ENCODE measurements at regions of chr3 and their contacts with region 1.

Region 1: GRCh38 chr3:138915503-138916498 is 31.1 kb downstream of the FOXL2 start:
- DNase-seq: peak; percentile 58
- ATAC-seq: peak; percentile 94
- H3K4me3 ChIP-seq: peak overlapping the region; percentile 69 to 80
- H3K27ac ChIP-seq: peak overlapping the region; percentile 89
- H3K4me1 ChIP-seq: peaks cover 25% of the 10 kb centered on the region
- H3K27me3 ChIP-seq: no peaks in the 10 kb centered on the region
- CTCF ChIP-seq: peak; percentile 99

Region 2: GRCh38 chr3:138578141-138578540 is 337.7 kb before region 1 on chr3:
- CTCF ChIA-PET with region 1: interaction called, 12 read pairs
- POLR2A ChIA-PET with region 1: no interaction called
- in situ Hi-C with region 1: no loop called
- intact Hi-C with region 1: no loop called
- DNase-seq: no peak
- ATAC-seq: no peak
- H3K4me3 ChIP-seq: no peak overlapping the region
- H3K27ac ChIP-seq: peak overlapping the region; percentile 59
- H3K4me1 ChIP-seq: peaks cover 12% of the 10 kb centered on the region
- H3K27me3 ChIP-seq: no peaks in the 10 kb centered on the region
- CTCF ChIP-seq: no peak

Region 3: DNA sequence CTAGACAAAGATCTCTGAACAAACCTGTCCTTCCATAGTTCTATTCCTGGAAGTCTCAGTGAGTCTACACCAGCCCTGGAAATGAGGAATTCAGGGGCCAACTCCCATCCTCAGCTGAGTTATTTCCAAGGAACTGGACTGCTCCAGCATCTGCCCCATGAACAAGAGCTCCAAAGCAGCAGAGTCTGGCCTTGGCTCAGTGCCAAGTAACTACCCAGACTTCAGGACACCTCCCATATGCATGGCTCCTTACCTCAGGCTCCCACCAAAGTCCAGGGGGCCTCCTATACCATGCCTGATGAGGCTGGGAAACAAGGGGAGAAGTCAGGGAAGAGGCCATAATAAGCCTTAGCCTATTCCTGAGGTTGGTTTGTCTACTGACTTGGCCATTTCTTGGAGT is 262.2 kb before region 1 on chr3:
- CTCF ChIA-PET with region 1: no interaction called
- POLR2A ChIA-PET with region 1: no interaction called
- in situ Hi-C with region 1: no loop called
- intact Hi-C with region 1: no loop called
- DNase-seq: no peak
- ATAC-seq: no peak
- H3K4me3 ChIP-seq: no peak overlapping the region
- H3K27ac ChIP-seq: no peak overlapping the region
- H3K4me1 ChIP-seq: no peaks in the 10 kb centered on the region
- H3K27me3 ChIP-seq: no peaks in the 10 kb centered on the region
- CTCF ChIP-seq: no peak

Region 4: DNA sequence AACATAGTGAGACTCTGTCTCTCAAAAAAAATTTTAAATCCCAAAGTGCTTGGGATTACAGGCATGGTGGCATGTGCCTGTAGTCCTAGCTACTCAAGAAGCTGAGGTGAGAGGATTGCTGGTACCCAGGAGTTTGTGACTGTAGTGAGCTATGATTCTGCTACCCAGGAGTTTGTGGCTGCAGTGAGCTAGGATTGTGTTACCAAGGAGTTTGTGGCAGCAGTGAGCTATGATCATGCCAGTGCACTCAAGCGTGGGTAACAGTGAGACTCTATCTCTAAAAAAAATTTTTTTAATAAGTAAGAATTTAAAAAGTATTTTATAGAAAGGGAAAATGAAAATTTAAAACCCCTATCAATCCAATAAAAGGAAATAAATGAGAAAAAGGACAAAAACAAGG is 237.7 kb before region 1 on chr3:
- CTCF ChIA-PET with region 1: interaction called, 10 read pairs
- POLR2A ChIA-PET with region 1: interaction called, 5 read pairs
- in situ Hi-C with region 1: no loop called
- intact Hi-C with region 1: no loop called
- DNase-seq: no peak
- ATAC-seq: no peak
- H3K4me3 ChIP-seq: no peak overlapping the region
- H3K27ac ChIP-seq: peak overlapping the region; percentile 48
- H3K4me1 ChIP-seq: peaks cover 24% of the 10 kb centered on the region; the same call in 1 of the 2 replicates
- H3K27me3 ChIP-seq: no peaks in the 10 kb centered on the region
- CTCF ChIP-seq: no peak

Region 5: GRCh38 chr3:138740072-138740471 is 175.7 kb before region 1 on chr3:
- CTCF ChIA-PET with region 1: interaction called, 12 read pairs
- POLR2A ChIA-PET with region 1: no interaction called
- in situ Hi-C with region 1: no loop called
- intact Hi-C with region 1: no loop called
- DNase-seq: no peak
- ATAC-seq: no peak
- H3K4me3 ChIP-seq: no peak overlapping the region
- H3K27ac ChIP-seq: no peak overlapping the region
- H3K4me1 ChIP-seq: no peaks in the 10 kb centered on the region
- H3K27me3 ChIP-seq: no peaks in the 10 kb centered on the region
- CTCF ChIP-seq: no peak

Region 6: GRCh38 chr3:138834359-138835212 is 81.2 kb before region 1 on chr3 and contains the start of gene PIK3CB:
- CTCF ChIA-PET with region 1: interaction called, 9 read pairs
- POLR2A ChIA-PET with region 1: no interaction called
- in situ Hi-C with region 1: no loop called
- intact Hi-C with region 1: loop called (anchors 2 kb)
- DNase-seq: peak; percentile 38
- ATAC-seq: peak; percentile 99
- H3K4me3 ChIP-seq: peak within 1 kb of the TSS; percentile 85
- H3K27ac ChIP-seq: peak within 1 kb of the TSS; percentile 100
- H3K4me1 ChIP-seq: peaks cover 24% of the 10 kb centered on the region
- H3K27me3 ChIP-seq: no peaks in the 10 kb centered on the region
- CTCF ChIP-seq: no peak; the same call in 1 of the 2 replicates
- total RNA-seq, gene PIK3CB: 73.9 TPM

Region 7: DNA sequence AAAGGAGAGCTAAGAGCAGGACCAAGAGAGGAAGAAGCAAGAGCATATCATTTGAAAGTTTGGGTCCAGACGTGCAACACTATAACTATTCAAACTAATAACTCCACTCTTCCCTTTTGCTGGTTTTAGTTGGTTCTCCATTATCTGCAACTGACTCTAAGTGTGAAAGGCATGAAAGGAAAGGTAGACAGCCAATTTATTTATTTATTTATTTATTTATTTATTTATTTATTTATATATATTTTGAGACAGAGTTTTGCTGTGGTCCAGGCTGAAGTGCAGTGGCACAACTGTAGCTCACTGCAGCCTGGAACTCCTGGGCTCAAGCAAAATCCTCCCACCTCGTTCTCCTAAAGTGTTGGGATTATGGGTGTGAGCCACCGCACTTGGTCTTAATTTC is 59.0 kb before region 1 on chr3:
- CTCF ChIA-PET with region 1: interaction called, 10 read pairs
- POLR2A ChIA-PET with region 1: interaction called, 3 read pairs
- in situ Hi-C with region 1: no loop called
- intact Hi-C with region 1: no loop called
- DNase-seq: no peak
- ATAC-seq: no peak
- H3K4me3 ChIP-seq: no peak overlapping the region
- H3K27ac ChIP-seq: no peak overlapping the region
- H3K4me1 ChIP-seq: peaks cover 7% of the 10 kb centered on the region
- H3K27me3 ChIP-seq: no peaks in the 10 kb centered on the region
- CTCF ChIP-seq: no peak